Endothelial cell of umbilical vein (primary cell): ENCODE measurements at regions of chr15 and their contacts with region 1.

Region 1: GRCh38 chr15:64893481-64894394 is 18.0 kb upstream of the ANKDD1A start:
- DNase-seq: peak; percentile 98
- H3K4me3 ChIP-seq: peak overlapping the region in 2 of 3 experiments; percentile 20 to 24
- H3K27ac ChIP-seq: peak overlapping the region; percentile 72
- H3K4me1 ChIP-seq: peaks cover 44% of the 10 kb centered on the region
- H3K27me3 ChIP-seq: no peaks in the 10 kb centered on the region
- CTCF ChIP-seq: no peak
- POLR2A ChIP-seq: peak; percentile 69

Region 2: GRCh38 chr15:63610200-63610841 is 1283.4 kb before region 1 on chr15:
- CTCF ChIA-PET with region 1: no interaction called
- POLR2A ChIA-PET with region 1: no interaction called
- dilution Hi-C with region 1: no loop called
- intact Hi-C with region 1: no loop called
- DNase-seq: peak; percentile 85
- H3K4me3 ChIP-seq: no peak overlapping the region
- H3K27ac ChIP-seq: peak overlapping the region; percentile 18
- H3K4me1 ChIP-seq: peaks cover 18% of the 10 kb centered on the region
- H3K27me3 ChIP-seq: no peaks in the 10 kb centered on the region
- CTCF ChIP-seq: peak; percentile 70 to 73
- POLR2A ChIP-seq: no peak

Region 3: DNA sequence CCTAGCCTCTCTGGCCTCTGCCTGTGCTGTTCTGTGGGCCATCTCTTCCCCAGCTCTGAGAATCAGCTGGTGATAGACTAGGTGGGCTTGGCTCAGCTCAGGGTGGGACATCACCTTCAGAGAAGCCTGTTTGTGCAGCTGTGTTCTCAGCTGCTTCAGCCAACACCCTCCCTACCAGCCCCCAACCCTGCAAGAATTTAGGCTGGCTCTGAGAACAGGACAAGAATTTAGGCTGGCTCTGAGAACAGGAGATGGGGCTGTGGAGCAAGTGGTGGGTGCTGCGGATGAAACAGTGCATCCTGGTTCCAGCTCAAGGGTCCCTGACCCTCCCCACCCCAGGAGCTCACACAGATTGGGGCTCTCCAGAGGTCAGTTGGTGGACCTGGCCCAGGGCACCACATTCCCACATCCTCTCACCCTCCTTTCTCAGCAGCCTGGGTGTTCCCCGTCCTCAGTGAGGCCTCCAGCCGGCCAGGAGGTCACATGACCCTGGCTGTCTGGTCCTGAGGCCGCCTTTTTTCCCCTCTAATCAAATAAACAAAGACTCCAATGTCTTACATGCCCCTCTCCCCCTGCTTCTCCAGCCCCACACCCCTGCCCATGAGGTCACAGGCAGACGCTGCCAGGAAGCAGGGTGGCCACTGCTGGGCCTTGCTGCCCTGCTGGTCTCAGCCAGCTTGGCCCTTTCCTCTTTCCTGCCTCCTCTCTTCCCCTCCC is 37.2 kb before region 1 on chr15:
- CTCF ChIA-PET with region 1: interaction called, 3 read pairs
- POLR2A ChIA-PET with region 1: no interaction called
- dilution Hi-C with region 1: no loop called
- intact Hi-C with region 1: loop called (anchors 5 kb)
- DNase-seq: peak; percentile 57
- H3K4me3 ChIP-seq: no peak overlapping the region
- H3K27ac ChIP-seq: peak overlapping the region; percentile 38
- H3K4me1 ChIP-seq: peaks cover 29% of the 10 kb centered on the region
- H3K27me3 ChIP-seq: no peaks in the 10 kb centered on the region
- CTCF ChIP-seq: no peak
- POLR2A ChIP-seq: no peak

Region 4: DNA sequence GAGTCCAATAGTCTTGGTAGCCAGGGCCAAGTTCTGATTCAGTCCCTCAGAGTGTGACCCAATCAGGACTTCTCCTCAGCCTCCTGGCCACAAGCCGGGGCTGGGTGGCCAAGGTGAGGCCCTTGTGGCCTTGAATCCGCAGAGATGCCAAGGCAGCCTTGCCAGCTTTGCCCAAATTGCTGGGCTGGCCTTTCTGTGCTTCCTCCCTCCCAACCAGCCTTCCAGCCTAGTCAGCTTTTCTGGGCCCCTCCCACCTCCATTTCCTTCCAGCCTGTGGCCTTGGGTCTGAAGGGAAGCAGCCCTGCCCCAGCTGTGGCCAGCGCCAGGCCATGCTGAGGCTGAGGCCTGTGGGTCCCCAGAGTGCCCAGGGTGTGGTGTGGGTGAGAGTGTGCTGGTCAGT is 16.3 kb before region 1 on chr15:
- CTCF ChIA-PET with region 1: interaction called, 6 read pairs
- POLR2A ChIA-PET with region 1: interaction called, 4 read pairs
- dilution Hi-C with region 1: no loop called
- intact Hi-C with region 1: loop called (anchors 2 kb)
- DNase-seq: peak; percentile 53
- H3K4me3 ChIP-seq: no peak overlapping the region
- H3K27ac ChIP-seq: no peak overlapping the region
- H3K4me1 ChIP-seq: peaks cover 12% of the 10 kb centered on the region
- H3K27me3 ChIP-seq: no peaks in the 10 kb centered on the region
- CTCF ChIP-seq: no peak
- POLR2A ChIP-seq: no peak

Region 5: GRCh38 chr15:64938192-64938591 is 44.5 kb after region 1 on chr15:
- CTCF ChIA-PET with region 1: no interaction called
- POLR2A ChIA-PET with region 1: no interaction called
- dilution Hi-C with region 1: no loop called
- intact Hi-C with region 1: no loop called
- DNase-seq: peak; percentile 23
- H3K4me3 ChIP-seq: no peak overlapping the region
- H3K27ac ChIP-seq: no peak overlapping the region
- H3K4me1 ChIP-seq: peaks cover 6% of the 10 kb centered on the region
- H3K27me3 ChIP-seq: no peaks in the 10 kb centered on the region
- CTCF ChIP-seq: no peak
- POLR2A ChIP-seq: no peak